ENCODE measurements at regions of chr7 and their contacts with region 1.

Region 1: DNA sequence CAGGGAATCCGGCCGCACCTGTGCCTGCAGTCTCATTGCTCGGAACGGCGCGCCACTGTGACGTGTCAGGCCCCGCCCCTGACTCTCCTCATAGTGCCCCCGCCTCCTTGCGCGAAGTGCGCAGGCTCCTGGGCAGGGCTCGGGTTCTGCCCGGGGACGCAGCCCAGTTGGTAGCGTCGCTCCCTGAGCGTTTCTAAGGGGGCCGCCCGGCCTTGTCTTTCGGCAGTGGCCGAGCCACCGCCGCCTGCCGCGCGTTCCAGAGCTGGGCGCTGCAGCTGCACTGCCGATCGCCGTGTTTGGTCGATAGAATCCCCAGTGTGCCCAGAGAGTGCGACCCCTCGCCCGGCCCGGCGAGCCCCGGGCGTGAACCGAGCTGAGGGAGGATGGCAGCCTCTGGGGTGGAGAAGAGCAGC is at the start of gene KLHL7:
- DNase-seq: peak; percentile 99
- H3K4me3 Mint-ChIP-seq: peak within 1 kb of the TSS; percentile 97
- H3K27ac Mint-ChIP-seq: peak within 1 kb of the TSS; percentile 94
- H3K4me1 Mint-ChIP-seq: peaks cover 17% of the 10 kb centered on the region
- H3K27me3 Mint-ChIP-seq: no peaks in the 10 kb centered on the region
- total RNA-seq, gene KLHL7: 16.1 and 20.0 TPM in 2 replicates

Region 2: GRCh38 chr7:22822486-22823141 is 283.0 kb before region 1 on chr7 and contains the start of gene TOMM7:
- intact Hi-C with region 1: loop called (anchors 1 kb)
- DNase-seq: peak; percentile 95
- H3K4me3 Mint-ChIP-seq: peak within 1 kb of the TSS; percentile 99
- H3K27ac Mint-ChIP-seq: peak within 1 kb of the TSS; percentile 97
- H3K4me1 Mint-ChIP-seq: peaks cover 32% of the 10 kb centered on the region
- H3K27me3 Mint-ChIP-seq: peaks cover 25% of the 10 kb centered on the region
- total RNA-seq, gene TOMM7: 196 and 201 TPM in 2 replicates

Region 3: DNA sequence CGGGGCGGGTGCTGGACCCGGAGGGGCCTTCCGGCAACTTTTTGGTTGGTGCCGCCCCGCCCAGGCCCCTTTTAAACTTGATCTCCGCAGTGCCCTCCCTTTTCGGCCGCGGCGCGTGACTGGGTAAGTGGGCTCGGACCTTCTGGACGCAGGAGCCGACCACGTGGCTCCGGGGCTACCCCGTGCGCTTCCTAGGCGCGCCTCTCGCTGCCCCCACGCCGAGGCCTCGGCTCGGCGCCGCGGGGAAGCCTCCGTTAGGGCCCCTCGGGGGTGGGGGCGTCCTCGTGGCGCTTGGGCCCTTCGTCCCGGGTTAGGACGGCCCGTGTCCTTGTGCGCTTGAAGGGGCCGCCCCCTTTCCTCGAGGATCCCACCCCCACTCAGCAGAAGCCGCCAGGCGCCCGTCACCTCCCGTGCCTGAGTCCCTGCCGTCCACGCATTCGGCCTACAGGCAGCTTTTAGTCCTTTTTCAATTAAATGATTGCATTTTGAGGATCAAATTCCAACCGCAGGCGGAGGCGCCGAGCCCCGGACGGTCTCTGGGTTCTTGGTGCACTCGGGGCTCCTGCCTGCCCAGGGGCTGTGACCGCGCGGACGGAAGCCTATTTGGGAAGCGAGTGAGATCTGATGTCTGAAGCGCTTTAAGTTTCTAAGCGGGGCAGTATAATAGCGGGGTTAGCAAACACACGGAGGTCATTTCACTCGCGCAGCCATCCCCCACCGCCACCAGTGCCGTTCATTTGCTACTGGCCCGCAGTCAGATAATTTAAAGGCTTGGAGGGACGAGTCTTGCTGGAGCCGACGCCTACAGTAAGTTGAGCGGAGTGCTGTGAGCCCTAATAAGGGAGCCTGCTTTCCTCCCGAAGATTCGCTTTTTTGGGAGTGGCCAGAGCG is 251.2 kb before region 1 on chr7:
- intact Hi-C with region 1: loop called (anchors 2 kb)
- DNase-seq: peak; percentile 94
- H3K4me3 Mint-ChIP-seq: peak overlapping the region; percentile 98
- H3K27ac Mint-ChIP-seq: peak overlapping the region; percentile 93
- H3K4me1 Mint-ChIP-seq: peaks cover 28% of the 10 kb centered on the region
- H3K27me3 Mint-ChIP-seq: peaks cover 1% of the 10 kb centered on the region

Region 4: DNA sequence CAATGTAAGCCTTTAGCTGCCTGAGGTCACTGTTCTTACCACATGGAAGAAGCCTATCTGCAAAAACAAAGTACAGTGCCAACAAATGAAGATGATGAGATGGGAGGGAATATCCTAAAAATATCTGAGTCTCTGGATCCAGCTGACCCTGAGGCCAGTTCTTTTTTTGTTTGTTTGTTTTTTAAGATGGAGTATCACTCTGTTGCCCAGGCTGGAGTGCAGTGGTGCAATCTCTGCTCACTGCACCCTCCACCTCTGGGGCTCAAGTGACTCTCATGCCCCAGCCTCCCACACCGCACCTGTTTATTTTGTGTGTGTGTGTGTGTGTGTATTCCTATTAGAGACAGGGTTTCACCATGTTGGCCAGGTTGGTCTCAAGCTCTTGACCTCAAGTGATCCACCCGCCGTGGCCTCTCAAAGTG is 136.6 kb before region 1 on chr7:
- intact Hi-C with region 1: no loop called
- DNase-seq: no peak
- H3K4me3 Mint-ChIP-seq: no peak overlapping the region
- H3K27ac Mint-ChIP-seq: no peak overlapping the region
- H3K4me1 Mint-ChIP-seq: no peaks in the 10 kb centered on the region
- H3K27me3 Mint-ChIP-seq: no peaks in the 10 kb centered on the region

Region 5: GRCh38 chr7:23261843-23262452 is 156.3 kb after region 1 on chr7:
- intact Hi-C with region 1: loop called (anchors 5 kb)
- DNase-seq: peak; percentile 85
- H3K4me3 Mint-ChIP-seq: no peak overlapping the region
- H3K27ac Mint-ChIP-seq: no peak overlapping the region
- H3K4me1 Mint-ChIP-seq: peaks cover 3% of the 10 kb centered on the region
- H3K27me3 Mint-ChIP-seq: peaks cover 8% of the 10 kb centered on the region